Esophagus squamous epithelium (tissue), 5 donors: ENCODE measurements at regions of chr13 and their contacts with region 1.

Region 1: DNA sequence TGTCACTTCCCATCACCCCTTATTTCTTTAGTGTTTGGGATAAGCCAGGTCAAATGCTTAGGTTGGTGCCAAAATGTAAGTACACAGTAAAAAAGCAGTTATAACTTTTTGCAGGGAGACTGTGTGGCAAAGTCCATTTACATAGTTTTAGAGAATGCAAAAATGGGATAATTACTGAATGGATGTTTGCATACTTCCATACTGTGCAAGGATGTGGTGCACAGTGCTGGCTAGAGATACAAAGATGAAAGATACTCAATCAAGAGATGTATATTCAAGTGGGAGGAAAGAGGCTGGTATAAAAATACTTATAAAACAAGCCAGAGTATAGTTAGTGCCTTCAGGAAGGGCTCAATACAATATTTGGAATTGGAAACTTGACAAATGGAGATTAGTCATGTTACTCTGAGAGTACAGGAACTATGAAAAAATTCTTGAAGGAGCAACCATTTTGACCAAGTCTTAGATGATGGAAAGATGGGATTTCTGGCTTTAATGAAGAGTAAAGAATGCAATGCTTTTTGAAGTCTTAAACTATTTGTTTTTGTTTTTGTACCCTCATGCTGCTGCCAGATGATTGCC is 8.0 kb downstream of the PDS5B start:
- DNase-seq: no peak
- H3K4me3 ChIP-seq: no peak overlapping the region
- H3K27ac ChIP-seq: no peak overlapping the region
- H3K4me1 ChIP-seq: peaks cover 0 to 30% (median 7%) of the 10 kb centered on the region in 3 donors
- H3K27me3 ChIP-seq: no peaks in the 10 kb centered on the region
- CTCF ChIP-seq: no peak
- POLR2A ChIP-seq: no peak

Region 2: GRCh38 chr13:33554919-33555791 is 960.9 kb after region 1 on chr13:
- intact Hi-C with region 1: loop called (anchors 10 kb)
- DNase-seq: no peak
- H3K4me3 ChIP-seq: no peak overlapping the region
- H3K27ac ChIP-seq: peak overlapping the region in 1 of 4 donors; percentile 20
- H3K4me1 ChIP-seq: no peaks in the 10 kb centered on the region
- H3K27me3 ChIP-seq: no peaks in the 10 kb centered on the region
- CTCF ChIP-seq: no peak
- POLR2A ChIP-seq: no peak